ENCODE measurements at regions of chr19 and their contacts with region 1.

Region 1: GRCh38 chr19:15154002-15154612 is 46.7 kb downstream of the NOTCH3 start:
- DNase-seq: no peak
- ATAC-seq: no peak
- H3K4me3 ChIP-seq: no peak overlapping the region
- H3K27ac ChIP-seq: no peak overlapping the region
- H3K4me1 ChIP-seq: no peaks in the 10 kb centered on the region
- H3K27me3 ChIP-seq: no peaks in the 10 kb centered on the region

Region 2: GRCh38 chr19:15091901-15092753 is 62.0 kb before region 1 on chr19:
- intact Hi-C with region 1: loop called (anchors 1 to 5 kb)
- DNase-seq: no peak
- ATAC-seq: peak in 1 of 2 donors; percentile 64
- H3K4me3 ChIP-seq: no peak overlapping the region
- H3K27ac ChIP-seq: no peak overlapping the region
- H3K4me1 ChIP-seq: no peaks in the 10 kb centered on the region
- H3K27me3 ChIP-seq: no peaks in the 10 kb centered on the region

Region 3: GRCh38 chr19:15101479-15102082 is 52.5 kb before region 1 on chr19:
- intact Hi-C with region 1: loop called in 1 of 4 experiments (anchors 5 kb)
- DNase-seq: no peak
- ATAC-seq: peak; percentile 64 to 66
- H3K4me3 ChIP-seq: no peak overlapping the region
- H3K27ac ChIP-seq: no peak overlapping the region
- H3K4me1 ChIP-seq: no peaks in the 10 kb centered on the region
- H3K27me3 ChIP-seq: no peaks in the 10 kb centered on the region

Region 4: DNA sequence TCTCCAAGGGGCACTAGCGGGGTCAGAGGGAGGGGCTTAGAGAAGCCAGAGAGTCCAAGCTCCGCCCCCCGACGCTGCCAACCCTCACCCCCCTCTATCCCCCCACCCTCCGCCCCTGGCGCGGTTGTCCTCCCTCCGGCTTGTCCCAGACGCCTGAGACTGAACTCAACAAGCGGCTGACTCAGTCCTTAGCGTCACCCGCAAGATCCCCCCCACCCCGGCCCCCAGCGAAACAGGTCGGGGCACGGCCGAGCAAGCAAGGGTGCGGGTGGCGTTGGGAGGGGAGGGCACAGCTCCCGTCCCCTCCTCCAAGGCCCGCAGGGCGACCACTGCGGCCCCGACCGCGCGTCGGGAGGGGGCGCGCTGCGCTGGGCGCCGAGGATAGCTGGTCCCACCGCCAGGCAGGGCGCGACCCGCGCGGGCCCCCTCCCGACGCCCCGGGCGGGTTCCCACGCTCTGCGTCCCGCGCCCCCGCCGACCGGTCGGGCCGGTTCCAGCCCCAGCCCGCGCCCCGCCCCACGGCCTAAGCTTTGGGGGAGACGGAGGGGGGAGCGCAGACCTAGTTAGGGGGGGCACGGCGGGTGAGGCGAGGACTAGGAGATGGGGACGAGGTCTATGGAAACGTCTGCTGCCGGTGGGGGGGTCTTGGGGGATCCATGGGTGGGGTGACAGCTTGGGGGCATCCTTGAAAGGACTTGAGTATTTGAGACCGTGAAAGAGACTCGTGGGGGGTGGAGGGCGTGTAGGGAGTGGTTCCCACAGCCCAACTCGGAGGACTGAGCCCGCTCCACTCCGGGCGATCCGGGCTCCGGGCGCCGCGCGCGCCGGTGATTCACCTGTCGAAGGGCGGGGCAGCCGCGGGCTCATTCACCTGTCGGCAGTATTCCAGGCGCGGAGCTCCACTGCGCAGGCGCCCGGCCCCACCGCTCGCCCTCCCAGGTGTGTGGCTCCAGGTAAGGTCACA is 41.5 kb after region 1 on chr19:
- intact Hi-C with region 1: no loop called
- DNase-seq: peak; percentile 71 to 88 (median 75)
- ATAC-seq: peak; percentile 46 to 68
- H3K4me3 ChIP-seq: peak overlapping the region; percentile 53
- H3K27ac ChIP-seq: no peak overlapping the region
- H3K4me1 ChIP-seq: no peaks in the 10 kb centered on the region
- H3K27me3 ChIP-seq: no peaks in the 10 kb centered on the region

Region 5: DNA sequence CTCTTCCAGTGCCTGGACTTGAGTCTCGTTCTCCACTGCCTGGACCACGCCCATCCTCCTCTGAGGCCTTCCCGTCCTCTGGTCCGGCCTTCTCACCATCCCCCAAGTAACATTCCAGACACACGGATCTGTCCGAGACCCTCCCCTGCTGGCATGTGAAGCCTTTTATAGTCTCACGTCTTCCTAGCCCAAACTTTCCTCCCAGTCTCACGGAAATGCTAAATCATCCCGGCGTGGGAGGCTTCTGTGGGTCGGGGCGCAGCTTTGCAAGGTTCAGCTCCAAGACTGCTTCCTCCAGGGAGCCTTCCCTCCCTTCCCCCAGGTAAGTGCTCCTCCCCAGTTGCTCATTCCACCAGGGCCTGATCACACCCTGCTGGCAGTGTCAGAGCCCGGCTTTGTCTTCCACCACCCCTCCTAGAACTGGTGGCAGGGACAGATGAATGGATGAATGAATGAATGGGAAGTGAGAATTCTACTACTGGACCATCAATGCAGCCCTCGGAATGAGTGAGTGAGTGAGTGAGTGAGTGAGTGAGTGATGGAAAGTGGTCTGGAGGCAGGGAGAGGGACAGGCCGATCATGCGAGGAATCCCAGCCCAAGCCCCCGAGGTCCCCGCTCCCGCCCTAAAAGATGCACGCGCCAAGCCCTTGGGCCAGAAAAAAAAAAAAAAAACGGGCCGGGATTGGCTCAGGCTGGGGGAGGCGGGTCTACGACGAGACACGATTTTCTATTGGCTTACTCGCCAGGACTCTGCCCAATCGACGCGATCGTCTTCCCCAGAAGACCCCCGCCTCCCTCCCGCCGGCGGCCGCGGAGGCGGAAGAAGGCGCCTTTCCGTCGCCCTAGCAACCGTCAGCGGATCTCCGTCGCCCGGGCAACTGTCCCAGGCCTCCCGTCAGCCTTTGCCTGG is 68.9 kb after region 1 on chr19:
- intact Hi-C with region 1: no loop called
- DNase-seq: peak; percentile 95 to 98 (median 97)
- ATAC-seq: peak; percentile 97 to 98
- H3K4me3 ChIP-seq: peak overlapping the region; percentile 68
- H3K27ac ChIP-seq: peak overlapping the region; percentile 10
- H3K4me1 ChIP-seq: no peaks in the 10 kb centered on the region
- H3K27me3 ChIP-seq: no peaks in the 10 kb centered on the region